ENCODE measurements at regions of chr9 and their contacts with region 1.

Region 1: DNA sequence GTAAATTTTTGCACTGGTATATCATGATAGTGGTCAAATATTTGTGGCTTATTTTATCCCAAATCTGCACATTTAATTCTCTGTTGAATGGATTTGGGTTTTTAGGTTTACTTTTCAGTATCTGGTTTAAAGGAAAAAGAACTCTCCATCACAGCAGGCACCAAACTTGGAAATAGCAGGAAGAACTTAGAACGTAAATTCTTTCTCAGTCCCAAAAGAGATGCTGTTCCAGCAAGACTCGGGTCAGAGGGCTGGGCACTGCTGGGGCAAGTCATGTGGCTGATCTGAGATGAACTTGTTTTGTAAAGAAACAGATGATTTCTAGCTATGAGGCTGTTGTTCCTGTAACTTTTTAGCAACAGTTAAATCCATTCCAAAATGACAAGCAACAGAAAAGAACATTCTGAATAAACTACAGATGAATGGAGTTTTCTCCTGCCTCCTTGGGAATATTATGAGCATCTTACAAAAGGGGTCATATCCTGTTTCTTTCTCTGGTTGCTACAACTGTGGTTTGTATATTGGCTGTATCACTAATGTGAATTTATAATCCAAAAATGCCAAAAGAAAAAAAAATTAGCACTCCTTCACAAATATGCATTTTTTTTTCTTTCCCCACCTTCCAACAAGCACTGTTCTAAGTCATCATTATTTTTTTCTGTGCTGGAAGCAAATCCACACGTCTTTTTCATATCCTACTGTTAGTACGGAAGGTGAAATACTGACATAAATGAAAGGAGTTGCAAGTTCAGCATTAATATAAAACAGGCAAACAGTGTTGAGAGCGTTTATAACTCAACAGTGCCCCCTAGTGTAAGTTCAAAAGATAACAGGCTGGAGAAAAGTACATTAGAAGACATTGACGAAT is 31.1 kb downstream of the OR2K2 start:
- DNase-seq: peak; percentile 37
- H3K4me3 ChIP-seq: no peak overlapping the region
- H3K27ac ChIP-seq: no peak overlapping the region
- H3K4me1 ChIP-seq: no peaks in the 10 kb centered on the region
- CTCF ChIP-seq: peak; percentile 92

Region 2: GRCh38 chr9:110452227-110452801 is 846.7 kb before region 1 on chr9:
- CTCF ChIA-PET with region 1: no interaction called
- POLR2A ChIA-PET with region 1: no interaction called
- intact Hi-C with region 1: loop called (anchors 10 kb)
- DNase-seq: peak; percentile 7
- H3K4me3 ChIP-seq: no peak overlapping the region
- H3K27ac ChIP-seq: no peak overlapping the region
- H3K4me1 ChIP-seq: no peaks in the 10 kb centered on the region
- CTCF ChIP-seq: peak; percentile 82

Region 3: DNA sequence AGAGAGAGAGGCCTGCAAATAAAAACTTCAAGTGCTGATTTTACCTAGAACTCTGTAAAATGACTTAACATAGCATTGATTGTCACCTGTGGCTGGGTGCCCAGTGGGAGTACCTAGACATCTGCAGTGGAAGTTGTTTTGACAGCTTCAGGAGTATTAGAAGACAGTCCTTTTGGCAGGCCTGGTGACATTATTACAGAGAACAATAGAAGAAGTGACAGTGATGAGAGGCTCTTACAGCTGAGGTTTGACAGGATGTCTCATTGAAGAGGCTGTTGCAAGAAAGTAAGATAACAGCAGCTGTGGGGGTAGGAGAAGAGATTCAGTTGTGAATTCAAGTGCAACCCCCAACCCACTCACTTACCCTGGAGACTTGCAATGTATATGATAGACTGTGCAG is 658.2 kb before region 1 on chr9:
- CTCF ChIA-PET with region 1: no interaction called
- POLR2A ChIA-PET with region 1: no interaction called
- intact Hi-C with region 1: loop called (anchors 5 kb)
- DNase-seq: no peak
- H3K4me3 ChIP-seq: no peak overlapping the region
- H3K27ac ChIP-seq: no peak overlapping the region
- H3K4me1 ChIP-seq: no peaks in the 10 kb centered on the region
- CTCF ChIP-seq: no peak

Region 4: GRCh38 chr9:110996436-110997220 is 302.3 kb before region 1 on chr9:
- CTCF ChIA-PET with region 1: no interaction called
- POLR2A ChIA-PET with region 1: no interaction called
- intact Hi-C with region 1: no loop called
- DNase-seq: no peak
- H3K4me3 ChIP-seq: no peak overlapping the region
- H3K27ac ChIP-seq: no peak overlapping the region
- H3K4me1 ChIP-seq: no peaks in the 10 kb centered on the region
- CTCF ChIP-seq: no peak

Region 5: GRCh38 chr9:111525056-111525977 is 226.4 kb after region 1 on chr9 and contains the start of gene ZNF483:
- CTCF ChIA-PET with region 1: no interaction called
- POLR2A ChIA-PET with region 1: no interaction called
- intact Hi-C with region 1: no loop called
- DNase-seq: peak; percentile 11
- H3K4me3 ChIP-seq: peak within 1 kb of the TSS; percentile 59
- H3K27ac ChIP-seq: no peak within 1 kb of the TSS
- H3K4me1 ChIP-seq: no peaks in the 10 kb centered on the region
- CTCF ChIP-seq: no peak
- total RNA-seq, gene ZNF483: 0.06 and 0.23 TPM in 2 replicates

Measured in OCI-LY7 (cell line).